Activated CD4-positive, alpha-beta memory T cell treated with anti-CD3 and anti-CD28 coated beads for 36 hours (primary cell): ENCODE measurements at regions of chr6 and their contacts with region 1.

Region 1: DNA sequence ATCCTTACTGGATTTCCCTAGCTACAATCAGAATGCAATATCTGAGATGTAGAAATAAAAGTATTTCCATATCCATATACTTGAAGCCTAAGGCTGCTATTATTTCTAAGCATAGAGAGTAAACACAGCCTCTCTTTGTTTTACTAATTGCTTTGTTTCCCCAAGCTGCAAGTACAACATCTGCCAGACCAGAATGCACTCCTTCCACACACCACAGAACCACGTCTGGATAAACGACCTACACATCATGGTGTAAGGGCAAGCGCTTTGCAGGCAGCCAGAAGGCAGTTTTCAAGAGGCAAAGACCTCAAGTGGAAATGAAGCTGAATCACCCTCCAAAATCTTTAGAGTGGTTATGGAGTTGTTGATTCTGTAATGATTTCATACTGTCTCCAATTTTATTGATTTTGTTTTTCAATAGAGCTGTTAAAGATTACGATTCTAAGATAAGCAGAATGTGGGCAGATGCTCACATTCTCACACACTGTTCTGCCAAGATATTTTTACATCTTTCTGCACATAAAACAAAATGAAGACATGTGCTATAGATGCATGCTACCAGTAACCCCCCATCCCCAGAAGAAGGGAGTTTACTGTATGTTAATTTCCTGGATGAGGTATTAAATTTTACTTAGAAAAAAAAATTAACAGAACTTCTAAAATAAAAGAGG is 88.8 kb downstream of the THEMIS start:
- DNase-seq: peak; percentile 30
- H3K4me3 Mint-ChIP-seq: peak overlapping the region; percentile 20
- H3K27ac Mint-ChIP-seq: no peak overlapping the region
- H3K4me1 Mint-ChIP-seq: peaks cover 87% of the 10 kb centered on the region
- H3K27me3 Mint-ChIP-seq: no peaks in the 10 kb centered on the region

Region 2: GRCh38 chr6:127748290-127748689 is 63.7 kb before region 1 on chr6:
- CTCF ChIA-PET with region 1: no interaction called
- POLR2A ChIA-PET with region 1: no interaction called
- intact Hi-C with region 1: loop called (anchors 1 kb)
- DNase-seq: no peak
- H3K4me3 Mint-ChIP-seq: peak overlapping the region; percentile 44
- H3K27ac Mint-ChIP-seq: peak overlapping the region; percentile 74
- H3K4me1 Mint-ChIP-seq: peaks cover 58% of the 10 kb centered on the region
- H3K27me3 Mint-ChIP-seq: no peaks in the 10 kb centered on the region

Region 3: GRCh38 chr6:127794405-127794804 is 17.6 kb before region 1 on chr6:
- CTCF ChIA-PET with region 1: interaction called, 3 read pairs
- POLR2A ChIA-PET with region 1: no interaction called
- intact Hi-C with region 1: loop called (anchors 1 kb)
- DNase-seq: no peak
- H3K4me3 Mint-ChIP-seq: no peak overlapping the region
- H3K27ac Mint-ChIP-seq: no peak overlapping the region
- H3K4me1 Mint-ChIP-seq: peaks cover 59% of the 10 kb centered on the region
- H3K27me3 Mint-ChIP-seq: no peaks in the 10 kb centered on the region

Region 4: DNA sequence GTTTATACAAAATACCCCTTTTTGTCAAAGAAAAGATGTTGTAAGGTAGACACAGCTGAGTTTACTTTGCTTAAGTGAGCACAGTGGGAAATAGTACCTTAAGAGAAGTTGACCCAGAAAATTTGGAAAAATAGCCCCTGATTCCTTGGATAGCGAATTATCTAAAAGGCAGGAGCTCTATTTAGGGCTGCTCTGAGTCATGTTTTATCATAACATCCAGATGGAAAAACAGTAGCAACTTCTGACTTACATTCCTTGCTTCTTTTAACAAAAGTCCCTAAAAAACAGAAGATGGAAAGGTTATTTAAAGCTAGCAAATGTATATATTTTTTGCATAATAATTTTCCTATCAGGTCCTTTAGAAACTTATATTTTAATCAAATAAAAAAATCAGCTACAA is 29.8 kb after region 1 on chr6:
- CTCF ChIA-PET with region 1: no interaction called
- POLR2A ChIA-PET with region 1: no interaction called
- intact Hi-C with region 1: no loop called
- DNase-seq: no peak
- H3K4me3 Mint-ChIP-seq: no peak overlapping the region
- H3K27ac Mint-ChIP-seq: no peak overlapping the region
- H3K4me1 Mint-ChIP-seq: peaks cover 48% of the 10 kb centered on the region
- H3K27me3 Mint-ChIP-seq: no peaks in the 10 kb centered on the region